ENCODE measurements at regions of chr16 and their contacts with region 1.

Region 1: DNA sequence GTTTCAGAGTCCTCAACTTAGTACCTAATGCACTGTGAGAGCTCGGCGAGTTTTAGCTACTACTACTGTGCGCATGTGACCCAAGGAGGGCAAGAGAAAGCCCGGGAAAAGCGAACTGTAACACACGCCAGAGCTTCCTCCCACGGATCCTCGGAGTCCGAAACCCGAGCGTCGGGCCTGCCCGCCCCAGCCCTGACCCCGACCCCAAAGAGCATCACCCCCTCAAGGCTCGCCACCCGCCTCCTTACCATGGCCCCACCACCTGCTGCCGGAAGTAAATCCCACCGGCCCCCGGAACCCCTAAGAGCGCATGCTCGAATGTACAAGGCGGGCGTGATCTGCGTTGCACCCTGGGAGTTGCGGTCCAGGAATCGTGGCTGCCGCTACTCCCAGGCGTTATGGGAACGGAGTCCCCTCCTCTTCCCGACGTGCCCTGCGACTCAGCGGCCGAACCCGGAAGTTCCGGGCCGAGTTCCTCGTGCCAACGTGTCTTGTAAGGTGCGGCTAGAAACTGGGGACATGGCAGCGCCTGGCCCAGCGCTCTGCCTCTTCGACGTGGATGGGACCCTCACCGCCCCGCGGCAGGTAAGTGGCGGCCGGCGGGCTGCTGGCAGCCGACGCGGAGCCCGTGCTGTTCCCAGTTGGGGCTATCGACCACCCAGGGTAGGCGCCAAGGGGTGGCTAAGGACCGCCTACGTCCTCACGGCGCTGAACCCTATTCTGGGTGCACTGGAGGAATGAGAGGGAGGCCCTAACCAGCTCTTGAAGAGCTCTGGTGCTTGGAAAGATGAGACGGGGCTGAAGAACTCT is at the starts of genes PMM2 and TMEM186:
- DNase-seq: peak; percentile 99
- total RNA-seq, gene PMM2: 22.5 TPM
- total RNA-seq, gene TMEM186: 10.4 TPM

Region 2: GRCh38 chr16:8567750-8568617 is 229.6 kb before region 1 on chr16:
- intact Hi-C with region 1: loop called (anchors 5 kb)
- DNase-seq: peak; percentile 79

Region 3: GRCh38 chr16:8660841-8661301 is 136.7 kb before region 1 on chr16:
- intact Hi-C with region 1: loop called (anchors 2 kb)
- DNase-seq: no peak

Region 4: DNA sequence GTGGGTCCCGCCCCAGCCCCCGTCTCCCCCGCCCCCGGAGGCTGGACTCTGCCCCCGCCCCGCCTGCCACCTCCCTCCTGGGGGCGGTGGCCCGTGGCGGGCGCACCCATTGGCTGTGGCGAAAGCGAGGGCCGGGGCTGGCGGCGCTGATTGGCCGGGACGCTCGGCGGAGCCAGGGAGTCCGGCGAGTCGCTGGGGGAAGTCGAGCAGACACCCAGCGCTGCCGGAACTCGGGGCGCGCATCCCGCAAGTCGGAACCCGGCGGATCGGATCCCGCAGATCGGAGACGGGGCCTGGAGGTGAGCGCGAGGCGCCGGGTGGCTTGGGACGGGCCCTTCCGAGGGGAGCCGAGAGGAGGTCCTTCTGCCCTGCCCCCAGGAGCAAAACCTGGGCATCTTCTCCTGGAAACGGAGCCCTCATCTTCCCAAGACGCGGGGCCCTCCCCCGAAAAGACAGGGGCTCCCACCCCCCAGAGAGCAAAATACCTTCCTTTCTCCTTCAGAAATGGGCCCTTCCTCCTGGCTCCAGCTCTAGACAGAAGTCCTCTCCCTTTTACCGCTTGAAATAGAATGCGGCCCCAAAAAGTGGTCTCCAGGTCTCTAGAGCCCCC is 123.1 kb before region 1 on chr16 and contains the start of gene ABAT:
- intact Hi-C with region 1: loop called (anchors 5 kb)
- DNase-seq: peak; percentile 96
- total RNA-seq, gene ABAT: 25.8 TPM

Region 5: GRCh38 chr16:8868416-8869211 is 71.0 kb after region 1 on chr16 and contains the start of gene CARHSP1:
- intact Hi-C with region 1: loop called (anchors 5 kb)
- DNase-seq: peak; percentile 95
- total RNA-seq, gene CARHSP1: 21.6 TPM

Region 6: DNA sequence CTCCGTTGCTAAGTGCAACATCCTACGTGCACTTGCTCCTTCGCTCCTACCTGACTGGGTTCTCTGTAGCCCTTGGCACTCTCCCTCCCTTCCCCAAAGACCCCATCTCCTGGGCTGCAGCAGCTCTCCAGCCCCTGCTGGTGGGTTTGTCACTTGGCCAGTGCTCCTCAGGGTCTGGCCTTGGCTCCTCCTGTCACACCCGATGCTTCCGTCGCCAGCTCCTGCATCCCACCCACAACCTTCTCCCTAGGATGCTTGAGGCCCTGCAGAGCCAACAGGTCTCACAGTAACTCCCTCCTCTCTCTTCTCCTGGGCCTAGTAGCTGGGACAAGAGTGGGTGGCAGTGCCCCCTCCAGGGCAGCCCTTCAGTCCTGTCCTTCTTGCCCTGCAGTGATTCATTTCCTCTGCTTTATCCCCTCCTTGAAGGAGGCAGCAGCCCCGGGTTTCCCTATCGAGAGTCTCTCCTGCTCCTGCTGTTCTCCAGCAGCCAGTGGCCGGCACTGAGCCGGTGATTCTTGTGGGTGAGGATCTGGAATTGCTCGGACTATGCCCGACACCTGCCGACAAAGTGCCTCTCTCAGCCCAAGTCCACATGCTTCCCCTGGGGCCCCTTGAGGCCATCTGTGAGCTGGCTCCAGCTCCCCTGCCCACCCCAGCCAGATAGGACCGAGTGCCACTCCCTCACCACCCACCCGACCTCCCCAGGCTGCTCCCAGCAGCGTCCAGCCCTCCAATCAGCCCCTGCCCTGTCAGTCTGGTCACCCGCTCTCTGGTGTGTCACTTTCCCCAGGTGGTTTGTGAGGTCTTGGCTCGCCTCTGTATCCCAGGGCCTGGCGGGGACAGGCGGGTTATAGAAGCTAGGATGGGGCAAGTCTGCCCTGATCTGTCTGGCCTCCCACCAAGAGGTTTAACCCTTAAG is 88.4 kb after region 1 on chr16:
- intact Hi-C with region 1: loop called (anchors 2 kb)
- DNase-seq: no peak

Measured in cardiac septum (tissue), 1 donor.